IMR-90 (cell line): ENCODE measurements at regions of chr3 and their contacts with region 1.

Region 1: GRCh38 chr3:100254168-100254777 is 6.5 kb upstream of the TBC1D23 start:
- DNase-seq: peak; percentile 78
- ATAC-seq: peak; percentile 97
- H3K4me3 ChIP-seq: no peak overlapping the region
- H3K27ac ChIP-seq: no peak overlapping the region
- H3K4me1 ChIP-seq: peaks cover 5% of the 10 kb centered on the region
- H3K27me3 ChIP-seq: no peaks in the 10 kb centered on the region
- CTCF ChIP-seq: peak; percentile 91
- POLR2A ChIP-seq: 0 out of 2 replicates have a peak, but pooled peaks have one; percentile 24
- RAD21 ChIP-seq: peak; percentile 98

Region 2: GRCh38 chr3:99833617-99834205 is 420.6 kb before region 1 on chr3:
- CTCF ChIA-PET with region 1: interaction called, 7 read pairs
- POLR2A ChIA-PET with region 1: no interaction called
- dilution Hi-C with region 1: no loop called
- in situ Hi-C with region 1: loop called (anchors 5 kb)
- intact Hi-C with region 1: loop called (anchors 1 kb)
- DNase-seq: no peak
- ATAC-seq: no peak
- H3K4me3 ChIP-seq: no peak overlapping the region
- H3K27ac ChIP-seq: no peak overlapping the region
- H3K4me1 ChIP-seq: peaks cover 2% of the 10 kb centered on the region; the same call in 1 of the 2 replicates
- H3K27me3 ChIP-seq: no peaks in the 10 kb centered on the region
- CTCF ChIP-seq: no peak
- POLR2A ChIP-seq: no peak
- RAD21 ChIP-seq: no peak

Region 3: DNA sequence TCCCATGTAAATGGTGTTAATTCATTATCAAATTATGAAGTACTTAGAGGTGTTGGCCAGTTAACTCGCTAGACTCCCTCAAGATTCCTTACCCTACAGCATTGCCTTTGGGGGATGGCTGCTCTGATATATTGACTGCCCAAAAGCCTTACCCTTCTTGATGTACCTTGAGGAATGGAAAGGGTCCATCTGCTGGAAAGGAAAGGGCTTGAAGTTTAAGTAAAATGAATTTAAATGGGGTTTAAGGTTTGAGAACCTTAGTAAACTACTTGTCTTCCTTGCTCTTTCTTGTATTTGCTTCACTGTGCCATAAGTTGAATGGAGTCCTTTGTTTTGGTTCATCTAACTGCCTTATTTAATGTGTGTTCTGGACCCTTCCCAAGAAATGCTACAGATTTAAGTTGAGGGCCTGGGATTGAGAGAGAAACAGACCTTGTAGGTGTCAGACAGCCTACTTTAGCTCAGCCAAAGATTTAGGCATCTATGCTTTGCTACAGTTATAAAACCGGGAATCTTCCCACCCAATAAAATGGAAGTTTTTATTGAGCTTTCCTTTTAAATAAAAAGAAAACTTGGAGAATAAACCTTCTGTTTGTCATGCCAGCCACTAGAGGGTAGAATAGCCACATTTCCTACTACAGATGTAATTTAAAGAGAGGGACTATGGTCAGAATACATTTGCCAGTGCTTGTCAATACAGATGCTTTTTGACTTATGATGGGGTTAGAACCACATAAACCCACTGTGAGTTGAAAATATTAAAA is 411.3 kb before region 1 on chr3:
- CTCF ChIA-PET with region 1: interaction called, 16 read pairs
- POLR2A ChIA-PET with region 1: no interaction called
- dilution Hi-C with region 1: no loop called
- in situ Hi-C with region 1: loop called (anchors 5 kb)
- intact Hi-C with region 1: loop called (anchors 1 kb)
- DNase-seq: peak; percentile 73
- ATAC-seq: peak; percentile 82
- H3K4me3 ChIP-seq: no peak overlapping the region
- H3K27ac ChIP-seq: no peak overlapping the region
- H3K4me1 ChIP-seq: peaks cover 15% of the 10 kb centered on the region
- H3K27me3 ChIP-seq: no peaks in the 10 kb centered on the region
- CTCF ChIP-seq: peak; percentile 83
- POLR2A ChIP-seq: no peak
- RAD21 ChIP-seq: peak; percentile 80

Region 4: GRCh38 chr3:99859825-99860224 is 394.4 kb before region 1 on chr3:
- CTCF ChIA-PET with region 1: interaction called, 6 read pairs
- POLR2A ChIA-PET with region 1: no interaction called
- dilution Hi-C with region 1: no loop called
- in situ Hi-C with region 1: no loop called
- intact Hi-C with region 1: loop called (anchors 5 kb)
- DNase-seq: peak; percentile 97
- ATAC-seq: peak; percentile 68
- H3K4me3 ChIP-seq: no peak overlapping the region
- H3K27ac ChIP-seq: no peak overlapping the region
- H3K4me1 ChIP-seq: peaks cover 24% of the 10 kb centered on the region
- H3K27me3 ChIP-seq: no peaks in the 10 kb centered on the region
- CTCF ChIP-seq: no peak
- POLR2A ChIP-seq: no peak
- RAD21 ChIP-seq: no peak

Region 5: DNA sequence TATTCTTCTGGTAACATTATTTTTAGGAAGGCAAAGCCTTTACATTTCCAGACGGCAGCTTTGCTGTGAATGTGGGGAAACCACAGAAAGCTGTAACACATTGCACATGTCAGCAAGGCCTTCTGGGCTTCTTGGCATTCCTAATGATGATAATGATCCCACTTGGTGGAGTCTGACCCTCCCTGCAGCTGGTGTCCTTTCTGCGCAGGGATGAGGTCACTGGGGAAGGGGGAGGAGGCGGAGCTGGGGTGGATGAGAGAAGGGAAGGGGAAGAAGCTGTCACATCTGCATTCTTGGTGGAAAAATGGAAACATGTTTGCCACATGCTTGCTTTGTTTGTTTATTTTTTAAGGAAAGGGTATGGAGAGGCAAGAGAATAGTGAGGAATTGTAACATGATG is 208.6 kb before region 1 on chr3:
- CTCF ChIA-PET with region 1: interaction called, 7 read pairs
- POLR2A ChIA-PET with region 1: no interaction called
- dilution Hi-C with region 1: no loop called
- in situ Hi-C with region 1: no loop called
- intact Hi-C with region 1: loop called (anchors 1 kb)
- DNase-seq: peak; percentile 99
- ATAC-seq: peak; percentile 69
- H3K4me3 ChIP-seq: no peak overlapping the region
- H3K27ac ChIP-seq: 0 out of 2 replicates have a peak overlapping the region, but pooled peaks have one; percentile 1
- H3K4me1 ChIP-seq: peaks cover 24% of the 10 kb centered on the region
- H3K27me3 ChIP-seq: peaks cover 4% of the 10 kb centered on the region; the same call in 1 of the 2 replicates
- CTCF ChIP-seq: no peak
- POLR2A ChIP-seq: no peak
- RAD21 ChIP-seq: peak; percentile 14

Region 6: GRCh38 chr3:100068826-100069225 is 185.4 kb before region 1 on chr3:
- CTCF ChIA-PET with region 1: interaction called, 11 read pairs
- POLR2A ChIA-PET with region 1: interaction called, 7 read pairs
- dilution Hi-C with region 1: no loop called
- in situ Hi-C with region 1: loop called (anchors 10 kb)
- intact Hi-C with region 1: loop called (anchors 1 kb)
- DNase-seq: peak; percentile 79
- ATAC-seq: peak; percentile 30; the same call in 1 of the 2 replicates
- H3K4me3 ChIP-seq: no peak overlapping the region
- H3K27ac ChIP-seq: no peak overlapping the region
- H3K4me1 ChIP-seq: peaks cover 19% of the 10 kb centered on the region
- H3K27me3 ChIP-seq: no peaks in the 10 kb centered on the region
- CTCF ChIP-seq: peak; percentile 77
- POLR2A ChIP-seq: no peak
- RAD21 ChIP-seq: peak; percentile 82